K562 (cell line): ENCODE measurements at regions of chr17 and their contacts with region 1.

Region 1: GRCh38 chr17:49548506-49549310 is 27.0 kb upstream of the NXPH3 start:
- DNase-seq: peak; percentile 57 to 65 (median 62)
- ATAC-seq: peak; percentile 89
- H3K4me3 ChIP-seq: no peak overlapping the region
- H3K27ac ChIP-seq: no peak overlapping the region
- H3K4me1 ChIP-seq: peaks cover 0 to 10% of the 10 kb centered on the region in 2 experiments; a peak in 1 of 5 replicates
- H3K27me3 ChIP-seq: peaks cover 0 to 13% of the 10 kb centered on the region in 2 experiments; a peak in 3 of 5 replicates
- CTCF ChIP-seq: peak; percentile 78 to 89 (median 85)
- EP300 ChIP-seq: no peak
- POLR2A ChIP-seq: no peak
- RAD21 ChIP-seq: peak; percentile 82 to 93

Region 2: GRCh38 chr17:49305926-49306325 is 242.8 kb before region 1 on chr17:
- CTCF ChIA-PET with region 1: no interaction called
- POLR2A ChIA-PET with region 1: no interaction called
- in situ Hi-C with region 1: loop called (anchors 5 kb)
- intact Hi-C with region 1: no loop called
- DNase-seq: no peak
- ATAC-seq: no peak
- H3K4me3 ChIP-seq: no peak overlapping the region
- H3K27ac ChIP-seq: no peak overlapping the region
- H3K4me1 ChIP-seq: no peaks in the 10 kb centered on the region; a peak in 3 of 5 replicates
- H3K27me3 ChIP-seq: no peaks in the 10 kb centered on the region
- CTCF ChIP-seq: no peak
- EP300 ChIP-seq: no peak
- POLR2A ChIP-seq: no peak
- RAD21 ChIP-seq: no peak

Region 3: GRCh38 chr17:49407981-49408501 is 140.7 kb before region 1 on chr17:
- CTCF ChIA-PET with region 1: interaction called, 20 read pairs
- POLR2A ChIA-PET with region 1: interaction called, 3 read pairs
- in situ Hi-C with region 1: loop called (anchors 5 kb)
- intact Hi-C with region 1: loop called (anchors 2 kb)
- DNase-seq: peak; percentile 81 to 85 (median 84)
- ATAC-seq: peak; percentile 100
- H3K4me3 ChIP-seq: no peak overlapping the region
- H3K27ac ChIP-seq: no peak overlapping the region
- H3K4me1 ChIP-seq: no peaks in the 10 kb centered on the region
- H3K27me3 ChIP-seq: no peaks in the 10 kb centered on the region
- CTCF ChIP-seq: peak; percentile 97 to 99 (median 98)
- EP300 ChIP-seq: no peak
- POLR2A ChIP-seq: no peak
- RAD21 ChIP-seq: peak; percentile 94 to 95

Region 4: GRCh38 chr17:49434821-49435670 is 113.7 kb before region 1 on chr17:
- CTCF ChIA-PET with region 1: interaction called, 4 read pairs
- POLR2A ChIA-PET with region 1: no interaction called
- in situ Hi-C with region 1: loop called (anchors 5 kb)
- intact Hi-C with region 1: loop called (anchors 1 kb)
- DNase-seq: peak; percentile 82 to 96 (median 92)
- ATAC-seq: peak; percentile 98
- H3K4me3 ChIP-seq: no peak overlapping the region
- H3K27ac ChIP-seq: no peak overlapping the region
- H3K4me1 ChIP-seq: peaks cover 0 to 5% of the 10 kb centered on the region in 2 experiments; a peak in 1 of 5 replicates
- H3K27me3 ChIP-seq: peaks cover 21 to 42% of the 10 kb centered on the region in 2 experiments; a peak in 4 of 5 replicates
- CTCF ChIP-seq: peak; percentile 75 to 82 (median 80)
- EP300 ChIP-seq: no peak
- POLR2A ChIP-seq: no peak
- RAD21 ChIP-seq: peak; percentile 44 to 71

Region 5: DNA sequence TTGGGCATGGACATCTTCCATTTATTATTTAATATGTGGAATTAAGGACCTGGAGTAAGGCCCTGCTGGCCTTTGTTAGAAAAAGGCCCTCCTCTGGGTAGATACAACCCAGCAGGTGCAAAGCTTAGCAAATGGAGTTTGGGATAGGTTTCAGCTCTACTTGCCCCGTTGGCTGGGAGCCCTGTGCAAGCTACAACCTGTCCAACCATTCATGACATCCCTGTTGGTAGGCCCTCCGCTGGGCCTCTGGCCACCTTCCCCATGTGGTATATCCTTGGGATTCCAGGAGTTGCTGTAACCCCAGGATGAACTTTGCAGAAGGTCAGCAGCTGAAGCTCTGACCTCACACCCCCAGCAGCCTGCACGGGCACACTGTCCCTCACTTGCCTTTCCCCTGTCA is 47.2 kb before region 1 on chr17:
- CTCF ChIA-PET with region 1: no interaction called
- POLR2A ChIA-PET with region 1: no interaction called
- in situ Hi-C with region 1: loop called (anchors 5 kb)
- intact Hi-C with region 1: no loop called
- DNase-seq: no peak
- ATAC-seq: no peak
- H3K4me3 ChIP-seq: no peak overlapping the region
- H3K27ac ChIP-seq: no peak overlapping the region
- H3K4me1 ChIP-seq: peaks cover 0 to 20% of the 10 kb centered on the region in 2 experiments; a peak in 2 of 5 replicates
- H3K27me3 ChIP-seq: peaks cover 28 to 63% of the 10 kb centered on the region in 2 experiments
- CTCF ChIP-seq: no peak
- EP300 ChIP-seq: no peak
- POLR2A ChIP-seq: no peak
- RAD21 ChIP-seq: no peak

Region 6: GRCh38 chr17:49616601-49617131 is 68.0 kb after region 1 on chr17:
- CTCF ChIA-PET with region 1: no interaction called
- POLR2A ChIA-PET with region 1: no interaction called
- in situ Hi-C with region 1: no loop called
- intact Hi-C with region 1: no loop called
- DNase-seq: no peak
- ATAC-seq: no peak
- H3K4me3 ChIP-seq: no peak overlapping the region
- H3K27ac ChIP-seq: no peak overlapping the region; the same call in 2 of the 3 replicates
- H3K4me1 ChIP-seq: peaks cover 0 to 6% of the 10 kb centered on the region in 2 experiments; a peak in 1 of 5 replicates
- H3K27me3 ChIP-seq: no peaks in the 10 kb centered on the region
- CTCF ChIP-seq: no peak
- EP300 ChIP-seq: no peak
- POLR2A ChIP-seq: no peak
- RAD21 ChIP-seq: no peak